ENCODE measurements at regions of chr1 and their contacts with region 1.

Region 1: GRCh38 chr1:116133696-116134650 is 22.8 kb downstream of the MAB21L3 start:
- DNase-seq: no peak
- H3K4me3 ChIP-seq: no peak overlapping the region
- H3K4me3 Mint-ChIP-seq: no peak overlapping the region
- H3K27ac Mint-ChIP-seq: no peak overlapping the region
- H3K4me1 ChIP-seq: peaks cover 6% of the 10 kb centered on the region
- H3K4me1 Mint-ChIP-seq: peaks cover 17% of the 10 kb centered on the region
- H3K27me3 ChIP-seq: no peaks in the 10 kb centered on the region
- H3K27me3 Mint-ChIP-seq: no peaks in the 10 kb centered on the region
- CTCF ChIP-seq: no peak

Region 2: DNA sequence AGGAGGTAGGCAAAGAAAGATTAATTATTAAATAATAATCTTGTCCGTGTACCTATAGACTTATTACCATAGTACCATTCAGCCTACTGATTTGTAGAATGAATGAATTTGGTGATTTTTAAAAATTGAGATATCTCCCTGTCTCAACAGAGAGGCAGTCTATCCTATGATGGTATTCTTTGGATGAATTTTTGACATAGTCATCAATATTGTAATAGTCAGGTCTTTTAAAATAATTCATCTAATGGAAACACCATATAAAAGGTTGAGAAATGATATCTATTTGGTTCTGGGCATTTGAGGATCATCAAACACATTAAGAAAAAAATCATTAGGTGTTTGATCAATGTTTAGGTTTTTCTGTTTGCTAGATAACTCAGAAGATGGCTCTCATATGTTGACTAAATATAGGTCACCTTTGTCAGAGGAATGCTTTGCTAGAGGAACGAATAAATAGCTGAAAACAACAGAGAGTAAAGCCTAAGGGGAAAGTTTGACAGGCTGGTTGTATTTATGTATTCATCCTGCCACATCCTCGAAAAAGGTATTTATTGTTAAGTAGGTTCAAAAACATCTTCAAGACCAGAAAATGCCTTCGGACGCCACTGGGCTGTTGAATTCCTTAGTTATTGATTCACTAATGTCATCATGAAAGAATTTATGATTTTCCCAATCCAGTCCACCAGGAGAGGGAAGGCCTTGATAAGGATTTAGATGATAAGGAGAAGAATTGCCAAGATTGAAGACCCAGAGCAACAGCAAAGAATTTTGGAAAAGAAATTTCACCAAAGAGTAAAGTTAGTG is 58.2 kb before region 1 on chr1:
- CTCF ChIA-PET with region 1: no interaction called
- POLR2A ChIA-PET with region 1: no interaction called
- intact Hi-C with region 1: loop called (anchors 10 kb)
- DNase-seq: peak in 1 of 2 experiments; percentile 16
- H3K4me3 ChIP-seq: no peak overlapping the region
- H3K4me3 Mint-ChIP-seq: no peak overlapping the region
- H3K27ac Mint-ChIP-seq: no peak overlapping the region
- H3K4me1 ChIP-seq: peaks cover 20% of the 10 kb centered on the region
- H3K4me1 Mint-ChIP-seq: peaks cover 17% of the 10 kb centered on the region
- H3K27me3 ChIP-seq: no peaks in the 10 kb centered on the region
- H3K27me3 Mint-ChIP-seq: no peaks in the 10 kb centered on the region
- CTCF ChIP-seq: no peak

Measured in Caco-2 (cell line).